HepG2 (cell line): ENCODE measurements at regions of chr2 and their contacts with region 1.

Region 1: GRCh38 chr2:133407046-133407740 is 161.1 kb downstream of the NCKAP5 start:
- DNase-seq: no peak
- ATAC-seq: no peak
- H3K4me3 ChIP-seq: no peak overlapping the region
- H3K27ac ChIP-seq: no peak overlapping the region
- H3K4me1 ChIP-seq: no peaks in the 10 kb centered on the region
- H3K27me3 ChIP-seq: no peaks in the 10 kb centered on the region
- CTCF ChIP-seq: no peak
- EP300 ChIP-seq: no peak
- POLR2A ChIP-seq: no peak
- RAD21 ChIP-seq: no peak

Region 2: DNA sequence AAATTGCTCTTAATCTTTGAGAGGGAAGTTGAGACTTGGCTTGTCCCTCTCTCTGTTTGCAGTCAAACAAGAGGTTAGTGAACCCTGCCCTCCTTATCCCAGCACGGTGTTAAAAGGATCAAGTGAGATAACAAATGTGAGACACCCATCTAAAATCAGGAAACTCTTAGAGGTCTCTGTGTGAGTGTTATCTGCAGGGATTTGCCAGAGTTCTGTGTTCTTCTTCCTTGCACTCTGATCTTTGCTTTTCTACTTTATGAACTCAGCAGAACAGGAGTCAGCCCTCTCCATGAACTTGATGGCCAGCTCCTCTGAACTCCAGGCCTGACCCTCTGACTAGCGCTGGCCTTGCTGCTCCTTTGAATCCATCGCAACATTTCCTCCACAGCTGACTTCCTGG is 37.3 kb after region 1 on chr2:
- CTCF ChIA-PET with region 1: no interaction called
- POLR2A ChIA-PET with region 1: no interaction called
- in situ Hi-C with region 1: no loop called
- intact Hi-C with region 1: loop called (anchors 1 kb)
- DNase-seq: no peak
- ATAC-seq: no peak
- H3K4me3 ChIP-seq: no peak overlapping the region
- H3K27ac ChIP-seq: no peak overlapping the region
- H3K4me1 ChIP-seq: no peaks in the 10 kb centered on the region
- H3K27me3 ChIP-seq: no peaks in the 10 kb centered on the region; a peak in 1 of 5 replicates
- CTCF ChIP-seq: no peak
- EP300 ChIP-seq: no peak
- POLR2A ChIP-seq: no peak
- RAD21 ChIP-seq: no peak